Posterior vena cava (tissue), 2 donors: ENCODE measurements at regions of chr13 and their contacts with region 1.

Region 1: GRCh38 chr13:45047394-45048310 is 58.3 kb downstream of the GPALPP1 start:
- DNase-seq: peak; percentile 86

Region 2: DNA sequence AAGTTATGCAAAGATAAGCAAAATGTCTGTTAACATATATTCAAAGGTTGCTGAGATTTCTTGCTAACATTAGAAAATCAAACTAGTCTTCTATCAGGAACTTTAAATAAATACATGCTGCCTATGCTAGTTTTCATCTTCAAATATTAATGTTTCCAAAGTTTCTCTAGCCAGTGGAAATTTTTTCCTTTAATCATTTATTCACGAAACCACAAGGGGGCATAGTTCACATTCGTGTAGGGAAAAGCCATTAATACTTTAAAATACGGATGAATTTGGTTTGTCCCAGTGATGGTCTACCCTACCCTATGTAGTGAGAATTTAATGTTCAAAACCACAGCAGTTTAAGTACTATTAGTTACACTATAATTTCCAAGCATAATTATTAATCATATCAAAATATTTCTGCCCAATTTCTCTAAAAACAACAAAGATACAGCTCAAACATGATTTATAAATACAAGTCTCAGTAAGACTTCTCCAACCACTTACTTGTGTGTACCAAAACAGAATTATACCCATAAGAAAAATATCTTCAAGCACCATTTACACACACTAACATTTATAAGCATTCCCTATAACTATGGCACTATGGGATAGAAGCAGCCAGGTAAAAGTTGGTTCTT is 74.6 kb before region 1 on chr13:
- intact Hi-C with region 1: no loop called
- DNase-seq: no peak

Region 3: GRCh38 chr13:45092663-45093062 is 45.0 kb after region 1 on chr13:
- intact Hi-C with region 1: no loop called
- DNase-seq: no peak

Region 4: DNA sequence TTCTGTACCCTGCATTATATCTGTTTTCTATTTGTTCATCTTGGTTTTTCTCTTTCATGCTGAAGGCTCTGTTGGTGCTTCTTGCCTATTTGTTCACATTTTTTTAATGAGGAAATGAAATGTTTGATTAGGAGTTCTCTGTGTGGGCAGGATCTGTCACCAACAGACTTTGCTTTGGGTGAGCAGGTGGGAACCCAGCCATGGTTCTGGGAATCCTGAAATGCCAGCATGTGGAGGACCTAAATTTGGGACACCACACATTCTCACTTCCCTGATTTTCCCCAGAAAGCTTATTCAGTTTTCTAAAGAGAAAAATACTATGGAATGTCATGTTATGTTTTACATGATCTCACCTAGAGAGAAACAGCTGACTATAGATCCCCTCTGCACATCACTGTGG is 259.3 kb after region 1 on chr13:
- intact Hi-C with region 1: loop called (anchors 5 to 10 kb)
- DNase-seq: no peak

Region 5: GRCh38 chr13:45500492-45501174 is 453.0 kb after region 1 on chr13:
- intact Hi-C with region 1: no loop called
- DNase-seq: no peak

Region 6: DNA sequence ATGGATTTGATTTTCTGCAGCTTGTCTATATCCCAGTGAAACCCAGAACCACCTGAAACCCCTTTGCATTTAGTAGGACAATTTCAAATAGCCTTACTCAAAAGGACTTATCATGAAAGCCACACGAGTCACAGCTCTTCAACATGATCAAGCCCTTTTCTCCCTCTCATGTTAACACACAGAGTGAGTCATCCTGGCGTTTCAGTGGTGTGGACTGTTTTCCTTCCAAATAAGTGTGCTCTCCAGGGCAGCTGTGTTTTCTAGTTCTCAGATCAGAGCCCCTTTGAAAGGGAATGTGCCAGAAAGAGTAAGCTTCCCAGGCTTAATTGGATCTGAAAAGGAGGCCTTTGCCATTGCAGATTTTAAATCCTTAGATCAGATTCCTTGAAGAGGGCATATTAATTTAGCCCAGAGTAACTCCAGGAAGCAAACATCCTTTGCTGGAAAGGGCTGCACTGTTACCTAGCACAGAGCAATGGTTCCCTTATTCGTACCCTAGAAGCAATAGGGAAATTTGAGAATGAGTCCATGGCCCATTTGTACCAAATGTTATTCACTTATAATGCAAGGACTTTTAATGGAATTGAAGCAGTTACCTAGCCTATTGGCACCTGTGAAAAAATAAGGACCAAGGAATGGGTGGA is 516.6 kb after region 1 on chr13:
- intact Hi-C with region 1: no loop called
- DNase-seq: no peak